IMR-90 (cell line): ENCODE measurements at regions of chr3 and their contacts with region 1.

Region 1: GRCh38 chr3:55330355-55330754 is 156.8 kb downstream of the WNT5A start:
- DNase-seq: peak; percentile 99
- ATAC-seq: peak; percentile 79
- H3K4me3 ChIP-seq: no peak overlapping the region
- H3K27ac ChIP-seq: peak overlapping the region; percentile 19; the same call in 1 of the 2 replicates
- H3K4me1 ChIP-seq: peaks cover 29% of the 10 kb centered on the region
- H3K27me3 ChIP-seq: no peaks in the 10 kb centered on the region
- CTCF ChIP-seq: no peak
- POLR2A ChIP-seq: peak; percentile 51; the same call in 1 of the 2 replicates
- RAD21 ChIP-seq: peak; percentile 30

Region 2: DNA sequence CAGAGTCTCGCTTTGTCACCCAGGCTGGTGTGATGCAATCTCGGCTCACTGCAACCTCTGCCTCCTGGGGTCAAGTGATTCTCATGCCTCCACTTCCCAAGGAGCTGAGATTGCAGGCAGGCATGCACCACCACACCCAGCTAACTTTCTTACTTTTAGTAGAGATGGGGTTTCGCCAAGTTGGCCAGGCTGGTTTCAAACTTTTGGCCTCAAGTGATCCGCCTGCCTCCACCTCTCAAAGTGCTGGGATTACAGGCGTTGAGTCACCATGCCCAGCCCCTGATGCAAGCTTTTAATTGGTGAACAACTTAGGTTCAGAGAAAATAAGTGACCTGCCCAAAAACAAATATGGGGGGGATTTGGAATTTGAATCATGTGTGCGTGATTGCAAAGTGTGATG is 648.6 kb before region 1 on chr3:
- CTCF ChIA-PET with region 1: no interaction called
- POLR2A ChIA-PET with region 1: no interaction called
- dilution Hi-C with region 1: no loop called
- in situ Hi-C with region 1: no loop called
- intact Hi-C with region 1: no loop called
- DNase-seq: no peak
- ATAC-seq: no peak
- H3K4me3 ChIP-seq: no peak overlapping the region
- H3K27ac ChIP-seq: no peak overlapping the region
- H3K4me1 ChIP-seq: no peaks in the 10 kb centered on the region
- H3K27me3 ChIP-seq: no peaks in the 10 kb centered on the region
- CTCF ChIP-seq: no peak
- POLR2A ChIP-seq: no peak
- RAD21 ChIP-seq: no peak

Region 3: DNA sequence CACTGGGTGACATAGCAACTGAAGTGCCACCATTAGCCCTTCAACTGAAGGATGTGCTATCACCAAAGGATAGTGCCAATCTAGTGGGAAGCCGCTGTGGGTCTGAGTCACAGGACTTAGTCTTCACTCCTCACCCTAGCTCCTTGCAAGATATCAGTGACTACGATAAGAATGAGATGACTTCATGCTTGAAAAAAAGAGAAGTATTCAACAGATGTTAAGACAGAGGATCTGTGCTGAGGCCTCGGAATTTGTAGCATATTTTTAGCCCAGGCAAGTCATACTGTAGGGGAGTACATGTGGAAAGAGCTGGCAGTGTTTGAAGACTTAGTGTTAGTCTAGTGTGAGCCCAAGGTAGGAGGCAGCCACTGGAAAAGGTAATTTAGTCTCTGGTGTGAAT is 131.8 kb before region 1 on chr3:
- CTCF ChIA-PET with region 1: no interaction called
- POLR2A ChIA-PET with region 1: no interaction called
- dilution Hi-C with region 1: no loop called
- in situ Hi-C with region 1: no loop called
- intact Hi-C with region 1: loop called (anchors 2 kb)
- DNase-seq: peak; percentile 99
- ATAC-seq: peak; percentile 93
- H3K4me3 ChIP-seq: no peak overlapping the region
- H3K27ac ChIP-seq: peak overlapping the region; percentile 89
- H3K4me1 ChIP-seq: peaks cover 21% of the 10 kb centered on the region
- H3K27me3 ChIP-seq: no peaks in the 10 kb centered on the region
- CTCF ChIP-seq: 0 out of 2 replicates have a peak, but pooled peaks have one; percentile 16
- POLR2A ChIP-seq: no peak
- RAD21 ChIP-seq: peak; percentile 41; the same call in 1 of the 2 replicates

Region 4: DNA sequence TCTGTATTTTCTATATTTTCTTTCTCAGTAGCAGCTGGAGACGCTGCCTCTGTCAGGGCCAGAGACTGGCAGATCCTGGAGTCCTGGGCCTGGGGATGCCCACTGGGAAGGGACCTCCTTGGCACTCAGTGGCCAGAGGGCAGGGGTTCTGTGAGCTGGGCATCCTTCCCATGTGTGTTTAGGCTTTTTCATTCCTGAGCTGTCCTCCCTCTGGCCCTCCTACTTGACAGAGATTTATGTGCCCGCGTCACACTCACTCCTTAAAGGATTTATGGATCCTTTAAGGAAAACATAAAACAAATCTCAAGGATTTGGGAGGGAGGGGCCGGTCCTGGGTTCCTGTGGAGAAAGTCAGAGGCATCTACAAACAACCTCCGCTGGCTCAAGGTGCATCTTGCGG is 39.1 kb after region 1 on chr3:
- CTCF ChIA-PET with region 1: no interaction called
- POLR2A ChIA-PET with region 1: no interaction called
- dilution Hi-C with region 1: no loop called
- in situ Hi-C with region 1: no loop called
- intact Hi-C with region 1: no loop called
- DNase-seq: no peak
- ATAC-seq: no peak
- H3K4me3 ChIP-seq: no peak overlapping the region
- H3K27ac ChIP-seq: no peak overlapping the region
- H3K4me1 ChIP-seq: no peaks in the 10 kb centered on the region
- H3K27me3 ChIP-seq: no peaks in the 10 kb centered on the region
- CTCF ChIP-seq: no peak
- POLR2A ChIP-seq: no peak
- RAD21 ChIP-seq: no peak

Region 5: GRCh38 chr3:55405436-55405835 is 75.1 kb after region 1 on chr3:
- CTCF ChIA-PET with region 1: no interaction called
- POLR2A ChIA-PET with region 1: no interaction called
- dilution Hi-C with region 1: no loop called
- in situ Hi-C with region 1: no loop called
- intact Hi-C with region 1: no loop called
- DNase-seq: peak; percentile 12
- ATAC-seq: no peak
- H3K4me3 ChIP-seq: no peak overlapping the region
- H3K27ac ChIP-seq: no peak overlapping the region
- H3K4me1 ChIP-seq: peaks cover 6% of the 10 kb centered on the region; the same call in 1 of the 2 replicates
- H3K27me3 ChIP-seq: no peaks in the 10 kb centered on the region
- CTCF ChIP-seq: 0 out of 2 replicates have a peak, but pooled peaks have one; percentile 18
- POLR2A ChIP-seq: no peak
- RAD21 ChIP-seq: no peak; the same call in 1 of the 2 replicates

Region 6: GRCh38 chr3:55461896-55462295 is 131.5 kb after region 1 on chr3:
- CTCF ChIA-PET with region 1: no interaction called
- POLR2A ChIA-PET with region 1: interaction called, 7 read pairs
- dilution Hi-C with region 1: no loop called
- in situ Hi-C with region 1: loop called (anchors 10 kb)
- intact Hi-C with region 1: loop called (anchors 5 kb)
- DNase-seq: peak; percentile 89
- ATAC-seq: peak; percentile 19; the same call in 1 of the 2 replicates
- H3K4me3 ChIP-seq: no peak overlapping the region
- H3K27ac ChIP-seq: no peak overlapping the region
- H3K4me1 ChIP-seq: peaks cover 3% of the 10 kb centered on the region
- H3K27me3 ChIP-seq: no peaks in the 10 kb centered on the region
- CTCF ChIP-seq: no peak
- POLR2A ChIP-seq: no peak
- RAD21 ChIP-seq: no peak

Region 7: DNA sequence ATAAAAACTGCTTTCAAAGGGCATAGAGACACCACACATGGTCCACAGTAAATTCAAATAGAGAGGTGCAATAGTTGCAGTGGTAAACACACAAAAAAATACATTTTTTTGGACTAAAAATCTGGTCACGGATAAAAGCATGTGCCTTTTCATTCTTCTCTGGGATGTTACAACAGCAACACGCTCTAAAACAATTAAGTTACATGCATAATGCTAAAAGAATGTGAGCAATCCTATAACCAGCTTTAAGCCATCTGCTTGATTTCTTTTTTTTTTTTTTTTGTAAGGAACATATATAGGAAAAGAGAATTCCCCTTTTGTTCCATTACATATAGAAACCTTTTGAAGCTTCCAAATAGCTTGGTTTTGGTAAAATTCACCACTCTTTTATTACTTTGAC is 136.7 kb after region 1 on chr3:
- CTCF ChIA-PET with region 1: no interaction called
- POLR2A ChIA-PET with region 1: interaction called, 7 read pairs
- dilution Hi-C with region 1: no loop called
- in situ Hi-C with region 1: loop called (anchors 10 kb)
- intact Hi-C with region 1: loop called (anchors 5 kb)
- DNase-seq: peak; percentile 76
- ATAC-seq: peak; percentile 7; the same call in 1 of the 2 replicates
- H3K4me3 ChIP-seq: no peak overlapping the region
- H3K27ac ChIP-seq: peak overlapping the region; percentile 57; the same call in 1 of the 2 replicates
- H3K4me1 ChIP-seq: peaks cover 16% of the 10 kb centered on the region
- H3K27me3 ChIP-seq: no peaks in the 10 kb centered on the region
- CTCF ChIP-seq: no peak
- POLR2A ChIP-seq: 0 out of 2 replicates have a peak, but pooled peaks have one; percentile 6
- RAD21 ChIP-seq: no peak